ENCODE measurements at regions of chr5 and their contacts with region 1.

Region 1: DNA sequence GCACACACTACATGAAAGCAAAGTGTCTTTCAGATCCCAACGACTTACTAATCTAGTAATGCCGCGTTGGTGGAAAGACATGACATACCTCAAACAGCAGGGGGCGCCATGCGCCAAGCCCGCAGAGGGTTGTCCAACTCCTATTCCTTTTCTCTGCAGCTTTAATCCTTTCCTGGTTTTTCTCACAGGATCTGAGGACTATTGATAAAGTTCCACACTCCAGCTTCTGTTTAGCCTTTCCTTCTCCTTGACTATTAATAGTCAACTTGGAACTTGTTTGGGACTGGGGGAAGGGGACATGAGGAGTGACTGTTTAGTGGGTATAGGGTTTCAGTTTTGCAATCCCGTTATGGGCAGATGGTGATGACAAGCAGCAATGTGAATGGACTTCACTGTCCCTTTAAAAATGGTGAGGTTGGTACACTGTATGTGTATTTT is 62.9 kb downstream of the OTULIN start:
- DNase-seq: peak; percentile 44 to 86 (median 76)
- ATAC-seq: peak; percentile 71
- H3K4me3 ChIP-seq: no peak overlapping the region
- H3K4me3 Mint-ChIP-seq: no peak overlapping the region
- H3K27ac ChIP-seq: no peak overlapping the region
- H3K27ac Mint-ChIP-seq: no peak overlapping the region
- H3K4me1 ChIP-seq: no peaks in the 10 kb centered on the region
- H3K4me1 Mint-ChIP-seq: peaks cover 8% of the 10 kb centered on the region
- H3K27me3 ChIP-seq: no peaks in the 10 kb centered on the region
- H3K27me3 Mint-ChIP-seq: no peaks in the 10 kb centered on the region
- CTCF ChIP-seq: peak; percentile 97

Region 2: DNA sequence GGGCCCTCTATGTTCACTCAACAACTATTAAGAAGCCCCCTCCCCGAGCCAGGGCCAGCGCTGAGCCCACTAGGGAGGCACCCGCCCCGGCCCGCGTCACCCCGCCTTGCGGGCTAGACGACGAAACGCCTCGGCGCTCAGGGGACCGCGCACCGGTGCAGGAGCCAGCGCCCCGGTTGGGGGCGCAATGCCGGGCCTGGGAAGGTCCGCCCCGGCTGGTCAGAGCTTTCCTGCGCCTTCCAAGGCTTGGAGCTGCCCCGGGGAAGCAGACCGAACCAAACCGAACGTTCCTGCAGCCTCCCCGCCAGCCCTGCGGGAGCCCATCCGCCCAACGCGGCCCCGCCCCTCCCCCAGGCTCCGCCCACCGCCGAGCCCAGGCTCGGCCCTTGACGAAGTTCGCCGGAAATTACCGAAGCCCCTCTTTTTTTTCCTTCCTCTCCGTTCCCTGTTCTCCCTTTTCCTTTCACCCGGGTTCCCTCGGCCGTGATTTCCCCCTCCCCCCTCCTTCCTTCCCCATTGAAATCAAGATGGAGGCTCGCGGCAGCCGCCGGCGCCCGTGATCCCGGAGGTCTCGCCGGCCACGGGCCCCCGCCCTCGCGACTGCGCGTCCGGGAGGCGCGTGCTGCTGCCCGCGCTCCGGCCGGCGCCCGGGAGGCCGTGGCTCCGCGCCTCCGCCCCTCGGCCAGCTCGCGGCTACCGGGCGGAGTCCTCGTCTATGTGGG is 584.5 kb before region 1 on chr5 and contains the start of gene TRIO:
- CTCF ChIA-PET with region 1: no interaction called
- POLR2A ChIA-PET with region 1: no interaction called
- intact Hi-C with region 1: loop called in 1 of 2 experiments (anchors 5 kb)
- DNase-seq: peak; percentile 32 to 88 (median 77)
- ATAC-seq: peak; percentile 71
- H3K4me3 ChIP-seq: peak within 1 kb of the TSS; percentile 56 to 93
- H3K4me3 Mint-ChIP-seq: peak within 1 kb of the TSS; percentile 84
- H3K27ac ChIP-seq: no peak within 1 kb of the TSS
- H3K27ac Mint-ChIP-seq: no peak within 1 kb of the TSS
- H3K4me1 ChIP-seq: peaks cover 13% of the 10 kb centered on the region
- H3K4me1 Mint-ChIP-seq: peaks cover 11% of the 10 kb centered on the region
- H3K27me3 ChIP-seq: peaks cover 0 to 3% of the 10 kb centered on the region in 2 experiments
- H3K27me3 Mint-ChIP-seq: peaks cover 40% of the 10 kb centered on the region
- CTCF ChIP-seq: peak; percentile 31
- total RNA-seq, gene TRIO: 3.4 to 6.5 TPM

Region 3: GRCh38 chr5:14700478-14701436 is 26.7 kb before region 1 on chr5:
- CTCF ChIA-PET with region 1: interaction called, 21 read pairs
- POLR2A ChIA-PET with region 1: no interaction called
- intact Hi-C with region 1: no loop called
- DNase-seq: no peak
- ATAC-seq: no peak
- H3K4me3 ChIP-seq: no peak overlapping the region
- H3K4me3 Mint-ChIP-seq: no peak overlapping the region
- H3K27ac ChIP-seq: peak overlapping the region in 1 of 2 experiments; percentile 21
- H3K27ac Mint-ChIP-seq: peak overlapping the region; percentile 94
- H3K4me1 ChIP-seq: peaks cover 53% of the 10 kb centered on the region
- H3K4me1 Mint-ChIP-seq: peaks cover 71% of the 10 kb centered on the region
- H3K27me3 ChIP-seq: no peaks in the 10 kb centered on the region
- H3K27me3 Mint-ChIP-seq: no peaks in the 10 kb centered on the region
- CTCF ChIP-seq: no peak

Region 4: DNA sequence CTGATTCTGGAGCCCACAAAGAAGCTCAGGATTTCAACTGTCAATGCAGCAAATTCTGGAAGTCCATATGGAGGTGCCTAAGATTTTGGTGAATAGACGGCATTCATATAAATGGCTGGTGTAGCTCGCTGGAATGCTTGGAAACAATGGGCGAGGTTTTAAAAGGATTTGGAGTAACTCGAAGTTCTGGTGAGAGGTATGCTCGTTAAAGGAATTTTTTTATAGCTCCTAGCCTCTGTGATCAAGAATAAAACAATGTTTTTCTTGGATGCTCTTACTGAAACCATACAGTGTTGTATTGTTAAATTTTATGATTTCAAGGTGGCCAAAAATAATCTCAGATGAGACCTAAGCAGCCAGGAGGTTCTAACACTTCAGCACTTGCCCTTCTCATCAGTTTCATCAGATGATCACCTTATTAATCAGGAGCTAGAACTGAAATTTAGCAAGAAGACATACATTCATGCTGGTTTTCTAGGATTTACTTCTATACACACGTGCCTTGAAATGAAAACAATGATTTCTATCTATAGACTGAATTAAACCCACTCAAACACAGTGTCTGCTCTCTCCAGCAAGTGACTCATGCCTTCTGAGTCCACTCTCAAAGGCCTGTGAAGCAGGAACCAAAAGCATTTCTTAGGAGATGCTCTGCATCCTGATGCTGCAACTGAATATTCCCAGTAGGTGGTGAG is 16.3 kb after region 1 on chr5:
- CTCF ChIA-PET with region 1: interaction called, 27 read pairs
- POLR2A ChIA-PET with region 1: no interaction called
- intact Hi-C with region 1: no loop called
- DNase-seq: no peak
- ATAC-seq: no peak
- H3K4me3 ChIP-seq: no peak overlapping the region
- H3K4me3 Mint-ChIP-seq: no peak overlapping the region
- H3K27ac ChIP-seq: no peak overlapping the region
- H3K27ac Mint-ChIP-seq: peak overlapping the region; percentile 79
- H3K4me1 ChIP-seq: peaks cover 10% of the 10 kb centered on the region
- H3K4me1 Mint-ChIP-seq: peaks cover 34% of the 10 kb centered on the region
- H3K27me3 ChIP-seq: no peaks in the 10 kb centered on the region
- H3K27me3 Mint-ChIP-seq: no peaks in the 10 kb centered on the region
- CTCF ChIP-seq: no peak

Region 5: GRCh38 chr5:14895301-14895700 is 167.9 kb after region 1 on chr5:
- CTCF ChIA-PET with region 1: interaction called, 7 read pairs
- POLR2A ChIA-PET with region 1: no interaction called
- intact Hi-C with region 1: loop called (anchors 1 to 2 kb)
- DNase-seq: peak in 2 of 9 experiments; percentile 26 to 30
- ATAC-seq: peak; percentile 42
- H3K4me3 ChIP-seq: no peak overlapping the region
- H3K4me3 Mint-ChIP-seq: no peak overlapping the region
- H3K27ac ChIP-seq: no peak overlapping the region
- H3K27ac Mint-ChIP-seq: no peak overlapping the region
- H3K4me1 ChIP-seq: no peaks in the 10 kb centered on the region
- H3K4me1 Mint-ChIP-seq: no peaks in the 10 kb centered on the region
- H3K27me3 ChIP-seq: no peaks in the 10 kb centered on the region
- H3K27me3 Mint-ChIP-seq: no peaks in the 10 kb centered on the region
- CTCF ChIP-seq: no peak

Region 6: GRCh38 chr5:14958196-14958595 is 230.7 kb after region 1 on chr5:
- CTCF ChIA-PET with region 1: interaction called, 13 read pairs
- POLR2A ChIA-PET with region 1: no interaction called
- intact Hi-C with region 1: no loop called
- DNase-seq: no peak
- ATAC-seq: no peak
- H3K4me3 ChIP-seq: no peak overlapping the region
- H3K4me3 Mint-ChIP-seq: no peak overlapping the region
- H3K27ac ChIP-seq: no peak overlapping the region
- H3K27ac Mint-ChIP-seq: no peak overlapping the region
- H3K4me1 ChIP-seq: no peaks in the 10 kb centered on the region
- H3K4me1 Mint-ChIP-seq: no peaks in the 10 kb centered on the region
- H3K27me3 ChIP-seq: no peaks in the 10 kb centered on the region
- H3K27me3 Mint-ChIP-seq: no peaks in the 10 kb centered on the region
- CTCF ChIP-seq: no peak

Region 7: GRCh38 chr5:15003511-15003920 is 276.1 kb after region 1 on chr5:
- CTCF ChIA-PET with region 1: interaction called, 100 read pairs
- POLR2A ChIA-PET with region 1: no interaction called
- intact Hi-C with region 1: loop called (anchors 1 kb)
- DNase-seq: peak; percentile 24 to 82 (median 53)
- ATAC-seq: peak; percentile 99
- H3K4me3 ChIP-seq: no peak overlapping the region
- H3K4me3 Mint-ChIP-seq: no peak overlapping the region
- H3K27ac ChIP-seq: no peak overlapping the region
- H3K27ac Mint-ChIP-seq: no peak overlapping the region
- H3K4me1 ChIP-seq: no peaks in the 10 kb centered on the region
- H3K4me1 Mint-ChIP-seq: no peaks in the 10 kb centered on the region
- H3K27me3 ChIP-seq: no peaks in the 10 kb centered on the region
- H3K27me3 Mint-ChIP-seq: peaks cover 5% of the 10 kb centered on the region
- CTCF ChIP-seq: peak; percentile 78

Measured in CD8-positive, alpha-beta T cell (primary cell).